PC-3 (cell line): ENCODE measurements at regions of chr4 and their contacts with region 1.

Region 1: DNA sequence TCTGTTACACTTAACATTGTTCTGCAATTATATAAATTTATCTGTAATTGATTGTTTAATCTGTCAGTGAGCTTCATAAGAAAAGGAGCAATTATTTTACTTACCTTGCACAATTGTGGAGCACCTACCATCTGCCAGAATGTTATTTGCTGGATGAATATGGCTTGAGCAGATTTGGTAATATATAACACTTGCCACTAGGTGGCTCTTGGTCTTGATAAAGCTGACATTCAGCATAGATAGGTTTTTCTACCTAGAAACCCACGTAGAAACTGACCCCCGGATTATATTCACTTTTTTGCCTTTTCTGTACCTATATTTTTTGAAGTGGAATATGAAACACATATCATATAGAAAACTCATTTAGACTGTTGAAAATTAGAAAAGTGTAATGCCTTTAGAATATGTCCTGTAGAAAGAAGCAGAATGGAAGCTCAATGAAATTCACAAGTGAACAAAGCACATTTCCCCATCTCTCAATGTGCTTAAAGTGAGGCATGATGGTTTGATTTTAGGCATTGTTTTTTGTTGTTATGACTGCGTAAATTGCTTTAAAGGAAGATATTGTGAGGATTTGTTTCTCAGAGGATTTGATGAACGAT is 9.5 kb downstream of the RBPJ start:
- DNase-seq: peak; percentile 75
- ATAC-seq: peak; percentile 79
- H3K4me3 ChIP-seq: no peak overlapping the region
- H3K27ac ChIP-seq: no peak overlapping the region
- H3K4me1 ChIP-seq: peaks cover 17% of the 10 kb centered on the region
- H3K27me3 ChIP-seq: no peaks in the 10 kb centered on the region
- CTCF ChIP-seq: peak; percentile 75

Region 2: GRCh38 chr4:26372525-26373172 is 42.4 kb after region 1 on chr4:
- CTCF ChIA-PET with region 1: no interaction called
- POLR2A ChIA-PET with region 1: interaction called, 17 read pairs
- intact Hi-C with region 1: no loop called
- DNase-seq: peak; percentile 62
- ATAC-seq: peak; percentile 88
- H3K4me3 ChIP-seq: no peak overlapping the region
- H3K27ac ChIP-seq: peak overlapping the region; percentile 46
- H3K4me1 ChIP-seq: peaks cover 42% of the 10 kb centered on the region
- H3K27me3 ChIP-seq: no peaks in the 10 kb centered on the region
- CTCF ChIP-seq: no peak

Region 3: DNA sequence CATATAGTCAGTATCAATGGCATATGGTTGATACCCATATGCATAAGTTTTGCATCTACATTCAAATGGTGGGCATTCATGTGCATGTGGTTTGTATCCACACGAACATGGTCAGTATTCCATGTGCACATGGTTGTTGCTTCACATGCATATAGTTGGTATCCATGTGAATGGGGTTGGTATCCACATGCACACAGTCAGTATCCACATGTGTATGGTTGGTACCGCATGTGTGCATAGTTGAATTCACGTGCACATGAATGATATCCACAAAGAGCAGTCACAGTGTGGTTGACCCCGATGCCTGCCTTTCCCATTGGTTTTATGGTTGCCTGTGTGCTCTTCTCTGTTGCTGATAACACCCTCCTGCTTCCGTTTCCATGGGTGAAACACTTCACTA is 958.2 kb after region 1 on chr4:
- CTCF ChIA-PET with region 1: no interaction called
- POLR2A ChIA-PET with region 1: no interaction called
- intact Hi-C with region 1: no loop called
- DNase-seq: no peak
- ATAC-seq: no peak
- H3K4me3 ChIP-seq: no peak overlapping the region
- H3K27ac ChIP-seq: no peak overlapping the region
- H3K4me1 ChIP-seq: no peaks in the 10 kb centered on the region
- H3K27me3 ChIP-seq: no peaks in the 10 kb centered on the region
- CTCF ChIP-seq: no peak